Posterior vena cava (tissue), 2 donors: ENCODE measurements at regions of chr3 and their contacts with region 1.

Region 1: GRCh38 chr3:126454437-126455198 is 21.1 kb downstream of the ZXDC start:
- DNase-seq: no peak

Region 2: DNA sequence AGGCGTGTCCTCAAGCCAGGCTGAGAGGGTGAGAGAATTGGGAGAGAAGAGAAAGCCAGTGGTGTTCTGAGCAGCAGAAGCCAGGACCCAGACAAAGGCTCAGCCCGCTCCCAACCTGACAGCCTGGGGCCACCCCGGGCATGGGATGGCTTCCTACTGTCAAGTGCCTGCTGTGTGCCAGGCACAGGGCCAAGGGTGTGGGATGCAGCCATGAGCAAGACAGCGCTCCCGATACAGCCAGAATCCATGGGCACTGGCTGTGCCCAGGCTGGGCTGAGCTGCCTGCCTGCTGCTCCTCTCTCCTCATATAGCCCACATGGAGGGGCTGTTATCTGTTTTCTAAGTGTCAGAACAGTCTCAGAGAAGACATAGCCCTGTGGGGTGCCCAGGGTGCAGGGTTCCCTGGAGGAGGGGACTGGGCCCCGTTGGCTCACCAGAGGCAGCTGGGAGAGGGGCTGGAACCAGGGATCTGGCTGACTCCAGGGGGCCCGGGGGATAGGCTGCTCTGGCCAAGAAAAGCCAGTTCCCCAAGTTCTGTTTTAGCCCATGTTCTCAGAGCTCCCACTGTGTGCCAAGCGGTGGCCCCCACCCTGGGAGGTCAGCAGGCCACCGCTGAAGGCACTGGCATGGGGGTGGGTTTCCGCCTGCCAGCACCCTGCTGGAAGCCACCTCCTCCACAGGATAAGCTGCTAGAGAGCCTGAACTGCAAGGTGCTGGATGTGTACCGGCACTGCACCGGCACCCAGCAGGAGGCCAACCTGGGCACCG is 20.9 kb before region 1 on chr3:
- intact Hi-C with region 1: loop called in 1 of 2 experiments (anchors 1 kb)
- DNase-seq: peak; percentile 78

Region 3: GRCh38 chr3:126711128-126711760 is 256.6 kb after region 1 on chr3:
- intact Hi-C with region 1: no loop called
- DNase-seq: no peak

Region 4: DNA sequence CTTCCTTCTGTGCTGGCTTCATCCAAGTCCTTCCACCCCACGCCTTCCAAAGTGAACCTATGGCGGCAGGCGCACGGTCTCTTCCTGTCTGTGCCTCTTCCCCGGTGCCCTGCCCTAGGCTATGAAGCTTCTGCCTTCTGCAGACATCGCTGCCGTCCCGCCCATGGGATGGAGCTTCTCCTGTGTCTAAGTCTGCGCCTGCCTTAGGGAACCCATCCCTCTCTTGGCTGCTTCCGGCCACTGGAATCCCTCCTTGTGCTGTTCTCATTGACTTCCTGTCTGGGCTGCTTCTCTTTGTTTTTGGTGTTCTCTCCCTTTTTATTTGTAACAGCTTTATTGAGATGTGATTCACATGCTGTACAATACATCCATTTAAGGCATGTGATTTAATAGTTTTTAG is 266.6 kb after region 1 on chr3:
- intact Hi-C with region 1: no loop called
- DNase-seq: no peak